ENCODE measurements at regions of chr4 and their contacts with region 1.

Region 1: DNA sequence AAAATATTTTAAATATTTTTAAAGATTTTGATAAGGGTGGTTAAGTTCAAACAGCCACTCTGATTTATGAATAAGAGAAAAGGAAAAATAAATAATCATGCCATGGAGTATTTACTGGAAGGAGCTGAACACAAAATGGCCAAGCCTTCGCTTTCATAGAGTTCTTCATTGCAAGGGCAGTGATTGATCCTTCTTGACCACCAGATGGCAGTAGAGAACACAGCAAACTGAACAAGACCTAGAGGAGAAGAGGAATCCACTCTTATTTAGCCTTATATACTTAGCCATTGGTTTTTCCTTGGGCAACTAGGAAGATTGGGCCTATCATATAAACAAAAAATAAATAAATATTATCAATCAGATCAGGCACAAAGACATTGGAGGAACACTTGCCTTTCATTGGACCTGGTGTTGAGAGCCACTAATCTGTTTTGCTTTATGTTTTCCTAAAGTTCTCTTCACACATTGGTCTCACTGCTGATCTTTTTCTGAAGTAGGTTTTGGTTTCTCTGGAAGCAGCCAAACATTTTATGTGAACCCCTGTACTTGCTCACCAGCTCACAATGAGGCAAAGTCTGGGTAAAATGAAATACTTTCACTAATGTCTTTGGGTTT is 58.1 kb upstream of the PARM1 start:
- DNase-seq: peak; percentile 59
- H3K4me3 ChIP-seq: no peak overlapping the region
- H3K27ac ChIP-seq: no peak overlapping the region
- H3K4me1 ChIP-seq: no peaks in the 10 kb centered on the region
- H3K27me3 ChIP-seq: no peaks in the 10 kb centered on the region
- CTCF ChIP-seq: peak; percentile 92

Region 2: GRCh38 chr4:75107755-75108612 is 233.1 kb after region 1 on chr4:
- intact Hi-C with region 1: no loop called
- DNase-seq: no peak
- H3K4me3 ChIP-seq: no peak overlapping the region
- H3K27ac ChIP-seq: no peak overlapping the region
- H3K4me1 ChIP-seq: no peaks in the 10 kb centered on the region
- H3K27me3 ChIP-seq: no peaks in the 10 kb centered on the region
- CTCF ChIP-seq: no peak

Region 3: DNA sequence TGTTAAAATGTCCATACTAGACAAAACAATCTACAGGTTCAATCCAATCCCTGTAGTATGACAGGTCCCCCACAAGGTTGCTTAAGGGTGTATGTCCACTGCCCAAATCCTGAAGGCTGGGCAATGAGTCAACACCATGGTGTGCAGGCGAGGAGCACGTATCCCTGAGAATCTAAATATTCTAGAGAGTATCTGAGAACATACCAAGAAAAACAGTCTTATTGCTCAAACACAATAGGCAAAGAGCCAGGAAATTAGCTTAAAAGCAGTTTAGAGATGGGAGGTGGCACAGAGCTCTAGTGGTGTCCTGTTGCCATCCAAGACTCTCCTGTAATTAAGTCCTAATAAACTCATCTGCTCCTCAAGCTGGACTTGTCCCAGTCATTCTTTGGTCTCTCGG is 602.3 kb after region 1 on chr4:
- intact Hi-C with region 1: loop called (anchors 10 kb)
- DNase-seq: no peak
- H3K4me3 ChIP-seq: no peak overlapping the region
- H3K27ac ChIP-seq: no peak overlapping the region
- H3K4me1 ChIP-seq: no peaks in the 10 kb centered on the region
- H3K27me3 ChIP-seq: no peaks in the 10 kb centered on the region
- CTCF ChIP-seq: no peak

Measured in colonic mucosa (tissue), 4 donors.